ENCODE measurements at regions of chr17 and their contacts with region 1.

Region 1: DNA sequence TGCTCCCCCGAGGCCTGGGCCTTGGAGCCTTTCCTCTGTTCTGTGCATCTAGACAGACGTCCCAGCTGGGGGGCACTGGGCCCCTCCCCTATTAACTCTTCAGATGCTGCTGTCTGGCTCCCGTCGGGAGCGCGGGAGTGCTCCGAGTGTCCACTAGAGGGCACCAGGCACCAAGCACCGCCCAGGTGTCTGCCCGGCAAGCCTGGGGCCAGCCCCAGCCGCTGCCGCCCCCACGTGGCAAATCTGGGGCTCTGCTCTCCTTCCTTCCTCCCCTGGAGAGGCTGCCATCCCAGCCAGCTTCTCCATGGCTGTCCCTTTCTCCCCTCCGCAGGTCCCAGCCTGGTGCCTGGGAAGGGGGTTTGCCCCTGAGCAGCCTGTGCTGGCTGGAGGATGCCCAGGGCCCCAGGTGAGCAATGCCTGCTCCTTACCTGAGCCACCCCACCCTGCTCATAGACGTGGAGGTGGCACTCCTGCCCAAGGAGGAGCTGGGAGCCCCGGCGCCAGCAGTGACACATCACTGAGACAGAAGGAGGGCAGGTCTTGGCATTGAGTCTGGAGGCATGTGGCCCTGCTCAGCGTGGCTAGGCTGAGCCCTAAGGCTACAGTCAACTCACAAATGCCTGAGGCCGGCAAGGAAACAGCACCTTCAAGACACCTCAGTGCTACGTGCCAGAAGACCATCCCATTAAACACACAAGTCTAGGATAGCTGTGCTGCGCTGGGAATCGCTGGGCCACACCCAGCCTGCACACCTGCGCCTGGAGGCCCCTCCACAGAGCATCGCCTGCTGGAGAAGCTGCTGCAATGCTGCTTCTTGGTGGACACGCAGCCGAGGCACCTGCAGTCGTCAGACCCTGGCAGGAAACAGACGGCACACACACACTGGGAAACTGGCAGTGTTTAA is 19.7 kb downstream of the TMEM235 start:
- DNase-seq: peak; percentile 87 to 93
- H3K4me3 ChIP-seq: no peak overlapping the region
- H3K4me3 Mint-ChIP-seq: no peak overlapping the region
- H3K27ac Mint-ChIP-seq: peak overlapping the region; percentile 45
- H3K4me1 ChIP-seq: peaks cover 17% of the 10 kb centered on the region
- H3K4me1 Mint-ChIP-seq: peaks cover 21% of the 10 kb centered on the region
- H3K27me3 ChIP-seq: no peaks in the 10 kb centered on the region
- H3K27me3 Mint-ChIP-seq: no peaks in the 10 kb centered on the region
- CTCF ChIP-seq: peak; percentile 99

Region 2: GRCh38 chr17:78082988-78083387 is 168.2 kb before region 1 on chr17:
- CTCF ChIA-PET with region 1: interaction called, 14 read pairs
- POLR2A ChIA-PET with region 1: no interaction called
- intact Hi-C with region 1: no loop called
- DNase-seq: no peak
- H3K4me3 ChIP-seq: no peak overlapping the region
- H3K4me3 Mint-ChIP-seq: no peak overlapping the region
- H3K27ac Mint-ChIP-seq: no peak overlapping the region
- H3K4me1 ChIP-seq: no peaks in the 10 kb centered on the region
- H3K4me1 Mint-ChIP-seq: no peaks in the 10 kb centered on the region
- H3K27me3 ChIP-seq: no peaks in the 10 kb centered on the region
- H3K27me3 Mint-ChIP-seq: no peaks in the 10 kb centered on the region
- CTCF ChIP-seq: no peak

Region 3: DNA sequence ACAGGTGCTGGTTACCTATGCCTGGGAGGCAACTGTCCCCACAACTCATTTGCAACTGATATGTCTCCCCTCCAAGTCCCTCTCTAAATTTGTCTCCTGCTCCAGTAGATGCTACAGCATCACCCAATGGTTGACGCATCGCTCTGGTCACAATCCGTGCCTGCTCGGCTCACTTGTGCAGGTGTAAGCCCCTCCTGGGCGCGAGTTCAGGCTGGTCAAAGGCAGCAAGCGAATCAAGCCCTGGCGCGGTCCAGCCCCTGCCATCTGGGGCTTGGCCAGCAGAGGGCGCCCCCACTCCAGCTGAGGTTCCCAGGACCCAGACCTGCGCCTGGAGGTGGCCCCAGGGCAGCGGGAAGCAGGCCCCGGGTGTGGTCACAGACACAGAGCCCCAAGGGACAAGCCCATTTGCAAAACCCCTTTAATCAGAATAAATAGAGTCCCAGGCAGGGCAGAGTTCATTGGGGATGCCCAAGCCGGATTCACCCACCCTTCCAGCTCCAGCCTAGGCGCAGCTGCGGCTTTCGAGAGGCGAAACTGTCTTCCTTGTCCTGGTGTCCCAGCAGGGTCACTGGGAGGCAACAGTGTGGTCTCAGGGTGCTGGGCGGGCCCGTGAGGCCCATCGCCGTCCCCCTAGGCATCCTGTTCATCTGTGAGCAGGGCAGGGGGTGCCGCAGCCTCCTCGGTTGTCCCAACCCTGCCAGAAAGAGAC is 138.5 kb before region 1 on chr17:
- CTCF ChIA-PET with region 1: interaction called, 3 read pairs
- POLR2A ChIA-PET with region 1: no interaction called
- intact Hi-C with region 1: loop called (anchors 2 kb)
- DNase-seq: peak; percentile 78 to 92
- H3K4me3 ChIP-seq: no peak overlapping the region
- H3K4me3 Mint-ChIP-seq: no peak overlapping the region
- H3K27ac Mint-ChIP-seq: peak overlapping the region; percentile 1
- H3K4me1 ChIP-seq: peaks cover 4% of the 10 kb centered on the region; the same call in 1 of the 2 replicates
- H3K4me1 Mint-ChIP-seq: peaks cover 6% of the 10 kb centered on the region
- H3K27me3 ChIP-seq: no peaks in the 10 kb centered on the region
- H3K27me3 Mint-ChIP-seq: no peaks in the 10 kb centered on the region
- CTCF ChIP-seq: peak; percentile 99

Region 4: GRCh38 chr17:78226749-78227399 is 24.3 kb before region 1 on chr17:
- CTCF ChIA-PET with region 1: interaction called, 15 read pairs
- POLR2A ChIA-PET with region 1: no interaction called
- intact Hi-C with region 1: no loop called
- DNase-seq: no peak
- H3K4me3 ChIP-seq: no peak overlapping the region
- H3K4me3 Mint-ChIP-seq: no peak overlapping the region
- H3K27ac Mint-ChIP-seq: no peak overlapping the region
- H3K4me1 ChIP-seq: no peaks in the 10 kb centered on the region
- H3K4me1 Mint-ChIP-seq: no peaks in the 10 kb centered on the region
- H3K27me3 ChIP-seq: no peaks in the 10 kb centered on the region
- H3K27me3 Mint-ChIP-seq: no peaks in the 10 kb centered on the region
- CTCF ChIP-seq: no peak

Measured in Caco-2 (cell line).